ENCODE measurements at regions of chr21 and their contacts with region 1.

Region 1: DNA sequence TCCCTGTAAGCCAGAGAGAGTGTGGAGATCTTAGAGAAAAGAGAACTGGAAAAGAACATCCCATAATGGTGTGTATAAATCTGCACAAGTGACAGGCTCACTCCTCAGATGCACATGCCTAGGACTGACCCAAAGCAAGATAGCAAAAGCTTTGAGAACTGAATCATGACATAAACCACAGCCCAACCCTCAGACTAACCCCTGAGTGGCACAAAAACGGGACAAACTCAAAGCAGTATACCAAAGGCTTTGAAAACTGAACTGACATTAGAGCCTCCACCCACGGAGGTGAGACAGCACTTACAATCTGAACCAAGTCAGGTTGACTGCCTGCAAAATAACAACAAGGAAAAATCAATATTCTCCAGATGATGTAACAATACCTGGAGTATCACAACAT is 70.8 kb downstream of the TIAM1 start:
- DNase-seq: peak; percentile 67
- H3K4me3 Mint-ChIP-seq: no peak overlapping the region
- H3K27ac Mint-ChIP-seq: peak overlapping the region; percentile 14
- H3K4me1 Mint-ChIP-seq: peaks cover 22% of the 10 kb centered on the region
- H3K27me3 Mint-ChIP-seq: no peaks in the 10 kb centered on the region

Region 2: DNA sequence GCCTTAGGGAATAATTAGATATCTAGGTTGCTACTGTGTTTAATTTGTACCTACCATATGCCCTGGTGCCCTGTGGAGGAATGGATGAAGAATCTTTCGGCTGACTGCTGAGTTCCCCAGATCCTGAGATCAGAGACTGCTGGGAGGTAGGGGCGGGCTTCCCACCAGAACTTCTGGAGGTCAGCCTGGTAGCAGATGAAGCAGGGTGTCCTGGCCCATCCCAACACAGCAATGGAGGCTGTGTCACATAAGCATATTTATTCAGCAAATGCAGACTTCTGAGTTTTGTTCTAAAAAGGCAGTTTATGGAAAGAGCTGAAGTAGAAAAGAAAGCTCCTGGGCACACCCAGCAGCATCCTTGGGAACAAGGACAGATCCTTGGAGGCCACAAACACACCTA is 309.0 kb before region 1 on chr21:
- CTCF ChIA-PET with region 1: no interaction called
- POLR2A ChIA-PET with region 1: no interaction called
- intact Hi-C with region 1: no loop called
- DNase-seq: no peak
- H3K4me3 Mint-ChIP-seq: no peak overlapping the region
- H3K27ac Mint-ChIP-seq: no peak overlapping the region
- H3K4me1 Mint-ChIP-seq: no peaks in the 10 kb centered on the region
- H3K27me3 Mint-ChIP-seq: no peaks in the 10 kb centered on the region

Region 3: GRCh38 chr21:31293986-31294385 is 20.7 kb after region 1 on chr21:
- CTCF ChIA-PET with region 1: no interaction called
- POLR2A ChIA-PET with region 1: no interaction called
- intact Hi-C with region 1: loop called (anchors 1 kb)
- DNase-seq: peak; percentile 84
- H3K4me3 Mint-ChIP-seq: no peak overlapping the region
- H3K27ac Mint-ChIP-seq: peak overlapping the region; percentile 70
- H3K4me1 Mint-ChIP-seq: peaks cover 41% of the 10 kb centered on the region
- H3K27me3 Mint-ChIP-seq: no peaks in the 10 kb centered on the region

Region 4: DNA sequence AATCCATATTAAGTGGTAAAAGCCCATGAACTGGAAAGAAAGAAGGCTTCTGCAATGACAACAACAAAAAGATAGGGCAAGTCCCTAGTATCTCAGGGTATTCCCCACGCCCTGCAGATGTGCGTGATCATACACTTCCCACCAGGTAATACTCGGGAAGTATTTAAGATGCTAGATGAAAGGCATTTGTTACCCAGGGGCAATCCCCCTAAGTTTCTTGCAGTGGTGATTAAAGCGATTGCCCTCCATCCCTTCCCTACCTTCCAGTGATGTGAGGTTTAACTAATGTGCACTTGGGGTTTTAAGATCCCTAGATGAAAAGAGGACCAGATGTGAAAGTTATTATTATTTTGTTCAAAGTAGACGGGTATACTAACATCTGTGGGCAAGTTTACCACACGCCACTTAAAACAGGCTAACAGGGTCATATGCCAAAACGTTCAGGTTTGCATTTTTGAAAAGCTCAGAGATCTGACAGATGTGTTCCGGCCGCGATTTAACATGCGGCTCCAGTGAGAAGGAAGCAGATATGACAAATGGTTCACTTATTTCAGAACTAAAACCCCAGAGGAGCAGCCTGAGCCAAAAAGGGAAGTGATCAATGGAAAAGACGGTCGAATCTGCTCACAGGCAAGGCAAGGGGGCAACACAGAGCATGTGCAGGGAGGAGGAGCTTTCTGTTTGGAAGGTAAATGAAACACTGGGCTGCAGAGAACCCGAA is 53.4 kb after region 1 on chr21:
- CTCF ChIA-PET with region 1: interaction called, 3 read pairs
- POLR2A ChIA-PET with region 1: interaction called, 5 read pairs
- intact Hi-C with region 1: loop called (anchors 2 kb)
- DNase-seq: peak; percentile 81
- H3K4me3 Mint-ChIP-seq: peak overlapping the region; percentile 47
- H3K27ac Mint-ChIP-seq: peak overlapping the region; percentile 88
- H3K4me1 Mint-ChIP-seq: peaks cover 30% of the 10 kb centered on the region
- H3K27me3 Mint-ChIP-seq: no peaks in the 10 kb centered on the region

Region 5: GRCh38 chr21:31354604-31355443 is 81.5 kb after region 1 on chr21:
- CTCF ChIA-PET with region 1: no interaction called
- POLR2A ChIA-PET with region 1: no interaction called
- intact Hi-C with region 1: no loop called
- DNase-seq: peak; percentile 90
- H3K4me3 Mint-ChIP-seq: peak overlapping the region; percentile 33
- H3K27ac Mint-ChIP-seq: peak overlapping the region; percentile 91
- H3K4me1 Mint-ChIP-seq: peaks cover 49% of the 10 kb centered on the region
- H3K27me3 Mint-ChIP-seq: no peaks in the 10 kb centered on the region